ENCODE measurements at regions of chr10 and their contacts with region 1.

Region 1: GRCh38 chr10:89414146-89414878 is at the start of gene IFIT5:
- DNase-seq: peak; percentile 62 to 83 (median 76)
- ATAC-seq: peak; percentile 88
- H3K4me3 ChIP-seq: peak within 1 kb of the TSS; percentile 77
- H3K4me3 Mint-ChIP-seq: peak within 1 kb of the TSS; percentile 90 to 100 (median 96)
- H3K27ac ChIP-seq: peak within 1 kb of the TSS; percentile 94
- H3K27ac Mint-ChIP-seq: peak within 1 kb of the TSS; percentile 96 to 100 (median 98)
- H3K4me1 ChIP-seq: peaks cover 21% of the 10 kb centered on the region in 2 donors
- H3K4me1 Mint-ChIP-seq: peaks cover 26 to 75% (median 65%) of the 10 kb centered on the region in 7 donors
- H3K27me3 ChIP-seq: no peaks in the 10 kb centered on the region
- H3K27me3 Mint-ChIP-seq: no peaks in the 10 kb centered on the region
- total RNA-seq, gene IFIT5: 13.1 to 34.0 (median 24.8) TPM

Region 2: GRCh38 chr10:88880282-88881076 is 533.8 kb before region 1 on chr10:
- CTCF ChIA-PET with region 1: no interaction called
- POLR2A ChIA-PET with region 1: interaction called, 8 read pairs
- intact Hi-C with region 1: loop called (anchors 2 kb)
- DNase-seq: peak; percentile 58 to 79 (median 75)
- ATAC-seq: peak; percentile 84
- H3K4me3 ChIP-seq: peak overlapping the region; percentile 85
- H3K4me3 Mint-ChIP-seq: peak overlapping the region; percentile 95 to 100 (median 98)
- H3K27ac ChIP-seq: peak overlapping the region; percentile 74
- H3K27ac Mint-ChIP-seq: peak overlapping the region; percentile 82 to 97 (median 95)
- H3K4me1 ChIP-seq: peaks cover 43 to 44% of the 10 kb centered on the region in 2 donors
- H3K4me1 Mint-ChIP-seq: peaks cover 43 to 79% (median 69%) of the 10 kb centered on the region in 7 donors
- H3K27me3 ChIP-seq: no peaks in the 10 kb centered on the region
- H3K27me3 Mint-ChIP-seq: no peaks in the 10 kb centered on the region

Region 3: DNA sequence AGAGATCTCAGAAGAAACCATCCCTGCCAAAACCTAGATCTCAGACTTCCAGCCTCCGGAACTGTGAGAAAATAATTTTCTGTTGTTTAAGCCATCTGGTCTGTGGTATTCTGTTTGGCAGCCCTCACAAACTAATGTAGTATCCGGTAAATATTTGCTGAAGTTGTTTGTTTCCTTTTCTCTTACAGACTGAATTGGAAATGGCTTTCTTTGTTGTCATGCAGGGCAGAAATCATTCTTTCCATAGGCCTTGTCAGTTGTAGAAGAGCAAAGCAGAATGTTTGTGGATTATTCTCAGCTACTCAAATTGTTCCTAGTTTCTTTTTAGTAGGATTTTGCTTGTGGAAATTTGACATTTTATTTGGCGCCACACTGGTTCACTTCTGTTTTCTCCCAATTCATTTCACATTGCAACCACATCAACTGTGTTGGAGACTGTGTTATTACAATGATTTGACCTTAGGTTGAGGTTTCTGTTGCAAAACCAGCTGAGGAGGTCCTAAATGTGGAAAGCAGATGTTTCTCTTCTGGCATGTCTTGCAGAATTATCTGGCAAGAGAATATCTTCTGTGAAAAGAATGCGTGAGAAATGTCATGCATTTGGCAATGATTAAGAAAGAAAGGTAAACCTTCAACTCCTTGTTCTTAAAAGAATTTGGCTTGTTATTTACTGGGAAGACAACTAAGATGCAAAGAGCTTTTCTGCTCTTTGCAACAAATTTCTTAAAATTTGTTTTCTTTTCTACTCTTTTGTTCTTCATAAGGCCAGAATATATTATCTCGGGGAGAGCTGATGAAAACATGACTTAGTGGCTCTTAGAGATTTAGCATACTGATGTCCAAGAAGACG is 487.5 kb before region 1 on chr10:
- CTCF ChIA-PET with region 1: no interaction called
- POLR2A ChIA-PET with region 1: no interaction called
- intact Hi-C with region 1: no loop called
- DNase-seq: no peak
- ATAC-seq: no peak
- H3K4me3 ChIP-seq: no peak overlapping the region
- H3K4me3 Mint-ChIP-seq: no peak overlapping the region
- H3K27ac ChIP-seq: no peak overlapping the region
- H3K27ac Mint-ChIP-seq: no peak overlapping the region
- H3K4me1 ChIP-seq: no peaks in the 10 kb centered on the region
- H3K4me1 Mint-ChIP-seq: peaks cover 0 to 8% (median 0%) of the 10 kb centered on the region in 7 donors
- H3K27me3 ChIP-seq: no peaks in the 10 kb centered on the region
- H3K27me3 Mint-ChIP-seq: no peaks in the 10 kb centered on the region

Region 4: DNA sequence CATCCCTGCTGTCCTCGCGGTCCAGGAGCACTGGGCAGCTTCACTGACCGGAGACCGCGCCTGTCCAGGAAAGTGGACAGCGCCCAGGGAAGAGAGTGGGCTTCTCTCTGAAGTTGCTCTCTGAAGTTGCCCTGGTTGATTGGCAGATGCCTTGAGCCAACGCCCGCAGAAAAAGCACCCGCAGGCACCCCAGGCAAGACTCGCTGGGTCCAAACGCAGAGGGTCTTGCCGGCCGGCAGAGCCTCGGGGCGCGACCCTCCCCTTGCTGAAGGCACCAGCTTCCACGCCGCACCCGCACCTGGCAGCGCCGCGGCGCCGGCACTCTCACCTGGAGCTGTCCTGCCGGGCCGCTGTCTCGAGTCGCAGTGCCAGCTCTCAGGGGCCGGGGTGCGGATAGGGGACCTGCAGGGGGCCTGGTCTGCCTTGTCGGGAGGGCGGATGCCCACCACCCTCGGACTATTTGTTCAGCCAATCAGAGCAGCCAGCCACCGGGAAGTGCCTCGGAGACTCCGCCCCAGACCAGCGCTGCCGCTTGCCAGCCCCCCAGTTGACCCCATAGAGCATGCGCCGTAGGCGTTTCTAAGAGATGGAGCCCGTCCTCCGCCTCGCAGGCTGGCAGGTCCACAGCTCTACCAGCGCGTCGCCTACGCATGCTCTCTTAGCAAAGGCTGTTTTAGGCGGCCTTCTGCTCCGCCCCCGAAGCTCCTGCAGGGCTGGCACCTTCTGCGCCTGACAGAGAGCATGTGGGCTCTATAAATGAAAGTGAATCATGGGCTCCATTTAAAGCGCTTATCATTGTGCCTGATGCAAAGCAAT is 162.7 kb before region 1 on chr10 and contains the start of gene LIPA:
- CTCF ChIA-PET with region 1: no interaction called
- POLR2A ChIA-PET with region 1: interaction called, 22 read pairs
- intact Hi-C with region 1: loop called (anchors 1 to 2 kb)
- DNase-seq: peak; percentile 78 to 97 (median 94)
- ATAC-seq: peak; percentile 97
- H3K4me3 ChIP-seq: peak within 1 kb of the TSS; percentile 80
- H3K4me3 Mint-ChIP-seq: peak within 1 kb of the TSS; percentile 82 to 91 (median 90)
- H3K27ac ChIP-seq: peak within 1 kb of the TSS; percentile 76
- H3K27ac Mint-ChIP-seq: peak within 1 kb of the TSS; percentile 38 to 90 (median 84)
- H3K4me1 ChIP-seq: peaks cover 8 to 9% of the 10 kb centered on the region in 2 donors
- H3K4me1 Mint-ChIP-seq: peaks cover 17 to 32% (median 22%) of the 10 kb centered on the region in 7 donors
- H3K27me3 ChIP-seq: no peaks in the 10 kb centered on the region
- H3K27me3 Mint-ChIP-seq: peaks cover 0 to 9% (median 0%) of the 10 kb centered on the region in 5 donors
- total RNA-seq, gene LIPA: 19.9 to 49.9 (median 48.3) TPM

Region 5: GRCh38 chr10:89391917-89392756 is 22.2 kb before region 1 on chr10 and contains the start of gene IFIT1:
- CTCF ChIA-PET with region 1: interaction called, 6 read pairs
- POLR2A ChIA-PET with region 1: interaction called, 61 read pairs
- intact Hi-C with region 1: loop called (anchors 1 kb)
- DNase-seq: peak in 8 of 9 donors; percentile 36 to 84 (median 72)
- ATAC-seq: peak; percentile 96
- H3K4me3 ChIP-seq: peak within 1 kb of the TSS; percentile 82
- H3K4me3 Mint-ChIP-seq: peak within 1 kb of the TSS; percentile 85 to 96 (median 90)
- H3K27ac ChIP-seq: peak within 1 kb of the TSS; percentile 72
- H3K27ac Mint-ChIP-seq: peak within 1 kb of the TSS; percentile 87 to 97 (median 93)
- H3K4me1 ChIP-seq: peaks cover 14 to 19% of the 10 kb centered on the region in 2 donors
- H3K4me1 Mint-ChIP-seq: peaks cover 14 to 53% (median 45%) of the 10 kb centered on the region in 7 donors
- H3K27me3 ChIP-seq: no peaks in the 10 kb centered on the region
- H3K27me3 Mint-ChIP-seq: peaks cover 0 to 6% (median 0%) of the 10 kb centered on the region in 5 donors
- total RNA-seq, gene IFIT1: 1.7 to 15.7 (median 6.5) TPM

Region 6: GRCh38 chr10:89837150-89837888 is 423.0 kb after region 1 on chr10:
- CTCF ChIA-PET with region 1: no interaction called
- POLR2A ChIA-PET with region 1: no interaction called
- intact Hi-C with region 1: loop called in 1 of 2 experiments (anchors 5 kb)
- DNase-seq: peak; percentile 14 to 48 (median 34)
- ATAC-seq: peak; percentile 70
- H3K4me3 ChIP-seq: peak overlapping the region; percentile 57
- H3K4me3 Mint-ChIP-seq: peak overlapping the region; percentile 87 to 94 (median 91)
- H3K27ac ChIP-seq: peak overlapping the region; percentile 65
- H3K27ac Mint-ChIP-seq: peak overlapping the region; percentile 59 to 92 (median 85)
- H3K4me1 ChIP-seq: peaks cover 0 to 7% of the 10 kb centered on the region in 2 donors
- H3K4me1 Mint-ChIP-seq: peaks cover 0 to 30% (median 22%) of the 10 kb centered on the region in 7 donors
- H3K27me3 ChIP-seq: no peaks in the 10 kb centered on the region
- H3K27me3 Mint-ChIP-seq: peaks cover 0 to 36% (median 5%) of the 10 kb centered on the region in 5 donors